ENCODE measurements at regions of chr19 and their contacts with region 1.

Region 1: DNA sequence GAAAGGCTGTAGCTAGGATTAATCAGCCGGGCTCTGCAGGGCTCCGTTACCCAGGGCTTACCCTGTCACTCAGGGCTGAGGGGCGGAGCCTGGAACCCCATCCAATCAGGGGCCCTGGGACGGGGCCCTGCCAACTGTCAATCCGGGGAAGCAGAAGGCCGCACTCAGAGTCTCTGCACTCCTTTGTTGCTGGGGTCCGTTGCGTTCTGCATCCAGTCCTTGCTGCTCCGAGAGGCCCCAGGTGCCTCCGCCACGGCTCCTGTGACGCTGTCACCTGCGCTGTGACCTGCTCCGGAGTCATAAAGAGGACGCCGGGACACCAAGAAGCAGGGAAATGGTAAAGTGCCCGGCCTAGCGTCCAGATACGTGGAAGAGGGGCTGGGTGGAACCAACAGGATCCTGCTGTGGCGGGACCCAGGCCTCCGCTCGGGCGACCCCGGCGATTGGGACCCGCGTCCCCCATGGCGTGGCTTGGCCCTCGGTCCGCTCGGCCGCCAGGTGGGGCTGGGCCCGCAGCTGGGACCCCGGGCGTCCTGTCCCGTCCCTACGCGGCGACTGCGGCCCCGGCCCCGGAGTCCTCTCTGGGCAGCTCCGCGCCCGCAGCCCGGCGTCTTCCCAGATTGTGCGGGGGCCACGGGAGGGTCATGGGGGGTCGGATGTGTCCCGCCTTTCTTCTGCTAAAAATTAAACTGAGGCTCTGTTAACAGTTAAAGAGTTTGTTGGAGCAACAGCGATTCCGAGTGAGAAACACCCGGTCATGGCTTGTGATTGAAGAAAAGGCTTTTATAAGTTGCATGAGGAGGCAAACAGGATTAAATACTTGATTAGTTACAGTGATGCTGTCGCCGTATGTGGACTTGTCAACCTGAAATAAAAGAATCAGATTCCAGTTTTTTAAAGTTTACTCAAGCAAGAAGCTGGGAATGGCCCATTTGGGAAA is at the start of gene ZNF491:
- DNase-seq: peak; percentile 84 to 99 (median 94)

Region 2: DNA sequence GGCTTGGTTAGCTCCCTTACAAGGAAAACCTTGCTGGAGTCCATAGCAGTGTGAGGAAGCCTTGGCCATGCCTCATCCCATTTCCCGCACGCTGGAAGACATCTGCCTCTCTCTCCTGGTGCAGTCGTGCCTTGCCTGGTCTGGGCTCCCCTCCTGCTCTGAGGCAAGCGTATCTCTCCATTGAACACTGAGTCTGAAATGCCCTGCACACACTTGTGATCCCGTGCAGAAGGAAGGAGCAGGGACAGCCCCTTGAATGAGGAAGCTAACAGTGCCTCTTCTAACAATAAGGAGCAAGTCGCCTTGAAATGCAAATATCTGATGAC is 15.0 kb after region 1 on chr19:
- intact Hi-C with region 1: loop called (anchors 2 kb)
- DNase-seq: peak in 4 of 10 donors; percentile 10 to 80 (median 15)

Region 3: GRCh38 chr19:11887611-11888531 is 89.2 kb after region 1 on chr19 and contains the start of gene ZNF69:
- intact Hi-C with region 1: loop called (anchors 5 kb)
- DNase-seq: peak; percentile 62 to 96 (median 80)

Region 4: DNA sequence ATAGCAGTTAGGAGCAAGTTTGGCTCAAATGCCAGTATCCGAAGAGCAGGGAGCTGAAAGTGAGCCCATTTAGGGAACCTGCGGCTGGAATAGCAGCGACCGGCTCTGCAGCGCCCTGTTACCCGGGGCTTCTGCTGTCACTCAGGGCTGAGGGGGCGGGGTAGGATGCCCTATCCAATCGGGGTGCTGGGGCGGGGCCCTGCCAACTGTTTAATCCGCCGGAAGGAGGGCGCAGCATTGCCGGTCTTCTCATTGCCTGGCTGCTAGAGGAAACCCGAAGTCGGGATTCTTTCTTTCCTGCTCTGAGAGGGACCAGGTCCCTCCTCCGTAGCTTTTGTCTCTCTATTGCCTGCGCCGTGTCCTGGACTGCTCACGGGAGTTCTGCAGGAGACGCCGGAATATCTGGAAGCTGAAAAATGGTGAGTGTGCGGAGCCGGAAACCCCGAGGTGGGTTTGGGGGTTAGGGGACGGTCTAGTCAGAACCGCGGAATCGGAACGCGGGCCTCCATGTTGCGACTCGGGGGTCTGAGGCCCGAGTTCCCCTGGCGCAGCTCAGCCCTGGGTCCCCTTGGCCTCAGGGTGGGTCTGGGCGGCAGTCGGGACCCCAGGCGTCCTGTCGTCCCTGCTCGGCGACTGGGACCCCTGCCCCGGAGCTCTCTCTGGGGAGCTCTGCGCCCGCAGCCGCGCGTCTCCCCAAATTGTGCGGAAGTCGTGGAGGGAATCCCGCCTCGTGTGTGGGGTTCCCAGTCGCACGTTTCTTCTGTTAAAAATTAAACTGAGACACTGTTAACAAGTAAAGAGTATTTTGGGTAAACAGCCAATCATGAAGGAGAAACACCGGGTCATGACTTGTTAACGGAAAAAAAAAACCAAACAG is 189.0 kb after region 1 on chr19:
- intact Hi-C with region 1: loop called (anchors 2 kb)
- DNase-seq: peak; percentile 83 to 99 (median 92)

Measured in posterior cingulate gyrus (tissue), 11 donors.